ENCODE measurements at regions of chr2 and their contacts with region 1.

Region 1: GRCh38 chr2:176161819-176162626 is 4.9 kb downstream of the HOXD3 start:
- DNase-seq: no peak
- H3K4me3 ChIP-seq: no peak overlapping the region
- H3K27ac ChIP-seq: no peak overlapping the region
- H3K4me1 ChIP-seq: peaks cover 0 to 53% (median 47%) of the 10 kb centered on the region in 4 donors
- H3K27me3 ChIP-seq: peaks cover 77 to 100% (median 88%) of the 10 kb centered on the region in 3 donors
- CTCF ChIP-seq: no peak
- EP300 ChIP-seq: no peak
- POLR2A ChIP-seq: no peak

Region 2: DNA sequence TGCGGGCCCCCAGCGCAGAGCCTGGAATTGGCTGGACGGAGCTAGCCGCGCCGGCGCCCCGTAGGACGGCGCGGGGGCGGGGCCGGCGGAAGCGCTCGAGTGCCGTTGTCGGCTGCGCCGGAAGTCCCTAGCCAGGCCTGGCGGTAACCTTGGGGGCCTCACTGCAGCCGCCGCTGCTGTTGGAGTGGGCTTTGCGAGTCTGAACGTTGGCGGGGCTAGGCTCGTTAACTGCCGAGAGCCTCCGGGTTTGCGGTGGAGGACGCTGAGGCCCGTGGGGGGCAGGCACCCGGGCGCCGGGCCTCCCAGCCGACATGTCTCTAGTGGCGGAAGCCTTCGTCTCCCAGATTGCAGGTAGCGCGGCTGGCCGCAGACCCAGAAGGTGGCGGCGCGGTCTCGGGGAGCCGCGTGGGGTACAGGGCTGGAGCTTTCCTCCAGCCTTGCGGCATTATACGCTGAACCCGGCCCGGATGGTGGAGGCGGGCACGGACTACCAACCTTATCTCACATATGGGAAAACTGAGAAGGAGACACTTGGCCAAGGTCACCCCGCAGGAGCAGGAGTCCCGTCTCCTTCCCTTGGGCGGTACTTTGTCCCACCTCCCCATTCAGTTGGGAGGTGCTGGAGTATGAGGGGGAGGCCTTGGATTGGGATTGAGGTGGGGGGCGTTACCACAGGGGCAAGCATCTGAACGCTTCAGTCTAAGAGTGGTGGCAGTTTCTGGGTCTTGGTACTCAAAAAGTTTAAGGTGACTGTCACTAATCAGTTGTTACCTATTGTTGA is 107.5 kb after region 1 on chr2 and contains the start of gene MTX2:
- intact Hi-C with region 1: loop called (anchors 5 kb)
- DNase-seq: peak; percentile 80
- H3K4me3 ChIP-seq: peak within 1 kb of the TSS; percentile 62 to 80 (median 69)
- H3K27ac ChIP-seq: peak within 1 kb of the TSS; percentile 80 to 90 (median 82)
- H3K4me1 ChIP-seq: peaks cover 0 to 13% (median 9%) of the 10 kb centered on the region in 4 donors
- H3K27me3 ChIP-seq: no peaks in the 10 kb centered on the region
- CTCF ChIP-seq: peak in 2 of 4 experiments; percentile 18 to 26
- EP300 ChIP-seq: no peak
- POLR2A ChIP-seq: peak; percentile 17 to 44
- total RNA-seq, gene MTX2: 34.5 to 49.5 (median 38.8) TPM